Right lobe of liver (tissue), 6 donors: ENCODE measurements at regions of chr2 and their contacts with region 1.

Region 1: DNA sequence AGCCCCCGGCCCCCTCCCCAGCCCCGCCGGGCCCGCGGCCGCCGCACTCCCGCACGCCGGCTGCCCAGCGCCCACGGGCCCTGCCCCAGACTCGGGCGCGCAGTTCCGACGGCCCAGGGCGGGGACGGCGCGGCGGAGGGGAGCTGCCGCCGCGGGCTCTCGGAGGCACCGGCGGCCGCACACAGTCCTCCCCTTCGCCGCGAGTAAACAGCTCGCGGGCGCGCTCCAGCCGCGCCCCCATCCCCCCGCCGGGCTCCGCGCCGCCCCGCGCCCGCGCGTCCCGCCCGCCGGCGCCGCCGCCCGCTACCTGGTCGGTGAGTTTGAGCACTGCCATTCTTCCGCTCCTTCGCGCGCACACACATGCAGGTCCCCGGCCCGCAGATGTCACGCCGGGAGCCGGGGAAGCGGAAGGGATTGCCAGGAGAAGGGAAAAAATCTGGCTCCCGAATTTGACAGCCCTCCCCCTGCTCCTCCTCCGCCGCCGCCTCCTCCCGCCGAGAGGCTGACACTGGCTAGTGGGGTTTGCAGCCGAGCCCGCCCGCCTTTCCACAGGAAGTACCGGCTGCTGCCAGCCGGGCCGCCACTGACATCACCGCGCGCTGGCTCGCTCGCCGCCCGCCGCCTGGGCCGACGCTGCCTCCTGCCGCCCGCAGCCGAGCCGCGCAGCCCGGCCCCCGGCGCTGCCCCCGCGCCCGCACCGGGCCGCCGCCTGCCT is at the start of gene ANKRD44:
- DNase-seq: peak; percentile 95 to 97 (median 95)
- ATAC-seq: peak; percentile 92 to 99 (median 95)
- H3K4me3 ChIP-seq: peak within 1 kb of the TSS; percentile 59 to 67 (median 61)
- H3K27ac ChIP-seq: peak within 1 kb of the TSS; percentile 66 to 94 (median 80)
- H3K4me1 ChIP-seq: peaks cover 0 to 20% (median 0%) of the 10 kb centered on the region in 4 donors
- H3K27me3 ChIP-seq: no peaks in the 10 kb centered on the region
- CTCF ChIP-seq: peak; percentile 28 to 83 (median 54)
- POLR2A ChIP-seq: peak; percentile 92
- total RNA-seq, gene ANKRD44: 7.9 to 19.5 (median 13.3) TPM

Region 2: GRCh38 chr2:197145471-197146138 is 164.8 kb before region 1 on chr2:
- intact Hi-C with region 1: no loop called
- DNase-seq: no peak
- ATAC-seq: peak; percentile 32 to 73 (median 56)
- H3K4me3 ChIP-seq: no peak overlapping the region
- H3K27ac ChIP-seq: no peak overlapping the region
- H3K4me1 ChIP-seq: no peaks in the 10 kb centered on the region
- H3K27me3 ChIP-seq: no peaks in the 10 kb centered on the region
- CTCF ChIP-seq: no peak
- POLR2A ChIP-seq: no peak

Region 3: GRCh38 chr2:197191177-197191939 is 119.1 kb before region 1 on chr2:
- intact Hi-C with region 1: loop called in 1 of 2 experiments (anchors 10 kb)
- DNase-seq: no peak
- ATAC-seq: peak; percentile 62 to 86 (median 76)
- H3K4me3 ChIP-seq: no peak overlapping the region
- H3K27ac ChIP-seq: no peak overlapping the region
- H3K4me1 ChIP-seq: peaks cover 0 to 4% (median under 1%) of the 10 kb centered on the region in 4 donors
- H3K27me3 ChIP-seq: no peaks in the 10 kb centered on the region
- CTCF ChIP-seq: peak; percentile 69 to 83 (median 74)
- POLR2A ChIP-seq: no peak

Region 4: GRCh38 chr2:197209742-197210408 is 100.6 kb before region 1 on chr2:
- intact Hi-C with region 1: loop called in 1 of 2 experiments (anchors 10 kb)
- DNase-seq: no peak
- ATAC-seq: peak in 1 of 4 donors; percentile 12
- H3K4me3 ChIP-seq: no peak overlapping the region
- H3K27ac ChIP-seq: no peak overlapping the region
- H3K4me1 ChIP-seq: peaks cover 0 to 20% (median 0%) of the 10 kb centered on the region in 4 donors
- H3K27me3 ChIP-seq: no peaks in the 10 kb centered on the region
- CTCF ChIP-seq: no peak
- POLR2A ChIP-seq: no peak

Region 5: DNA sequence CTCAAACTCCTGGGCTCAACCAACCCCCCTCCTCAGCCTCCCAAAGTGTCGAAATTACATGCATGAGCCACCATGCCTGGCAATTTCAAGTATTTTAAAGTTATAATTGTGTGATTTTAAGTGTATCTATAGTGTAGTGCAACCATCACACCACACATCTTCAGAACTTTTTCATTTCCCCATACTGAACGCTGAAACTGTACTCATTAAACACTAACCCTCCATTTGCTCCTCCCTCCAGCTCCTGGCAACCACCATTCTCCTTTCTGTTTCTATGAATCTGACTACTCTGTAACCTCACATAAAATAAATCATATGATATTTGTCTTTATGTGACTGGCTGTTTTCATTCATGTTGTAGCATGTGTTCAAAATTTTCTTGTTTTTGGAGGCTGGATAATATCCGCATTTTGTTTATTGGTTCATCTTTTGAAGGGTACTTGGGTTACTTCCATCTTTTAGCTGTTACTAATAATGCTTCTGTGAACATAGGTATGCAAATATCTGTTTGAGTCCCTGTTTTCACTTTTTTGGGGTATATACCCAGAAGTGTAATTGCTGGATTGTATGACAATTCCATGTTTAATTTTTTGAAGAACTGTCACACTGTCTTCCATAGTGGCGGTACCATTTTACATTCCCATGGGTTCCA is 682.2 kb after region 1 on chr2:
- intact Hi-C with region 1: no loop called
- DNase-seq: no peak
- ATAC-seq: no peak
- H3K4me3 ChIP-seq: no peak overlapping the region
- H3K27ac ChIP-seq: no peak overlapping the region
- H3K4me1 ChIP-seq: no peaks in the 10 kb centered on the region
- H3K27me3 ChIP-seq: no peaks in the 10 kb centered on the region
- CTCF ChIP-seq: no peak
- POLR2A ChIP-seq: no peak